ENCODE measurements at regions of chr6 and their contacts with region 1.

Region 1: GRCh38 chr6:109382576-109383437 is 540 bp upstream of the CD164 start:
- DNase-seq: peak; percentile 88
- H3K4me3 Mint-ChIP-seq: peak overlapping the region; percentile 89
- H3K27ac Mint-ChIP-seq: peak overlapping the region; percentile 98
- H3K4me1 Mint-ChIP-seq: peaks cover 46% of the 10 kb centered on the region
- H3K27me3 Mint-ChIP-seq: peaks cover 6% of the 10 kb centered on the region

Region 2: GRCh38 chr6:107957909-107958688 is 1424.7 kb before region 1 on chr6 and contains the start of gene SEC63:
- intact Hi-C with region 1: loop called (anchors 2 kb)
- DNase-seq: peak; percentile 97
- H3K4me3 Mint-ChIP-seq: peak within 1 kb of the TSS; percentile 100
- H3K27ac Mint-ChIP-seq: peak within 1 kb of the TSS; percentile 99
- H3K4me1 Mint-ChIP-seq: peaks cover 14% of the 10 kb centered on the region
- H3K27me3 Mint-ChIP-seq: peaks cover 5% of the 10 kb centered on the region
- total RNA-seq, gene SEC63: 87.1 and 90.7 TPM in 2 replicates

Region 3: DNA sequence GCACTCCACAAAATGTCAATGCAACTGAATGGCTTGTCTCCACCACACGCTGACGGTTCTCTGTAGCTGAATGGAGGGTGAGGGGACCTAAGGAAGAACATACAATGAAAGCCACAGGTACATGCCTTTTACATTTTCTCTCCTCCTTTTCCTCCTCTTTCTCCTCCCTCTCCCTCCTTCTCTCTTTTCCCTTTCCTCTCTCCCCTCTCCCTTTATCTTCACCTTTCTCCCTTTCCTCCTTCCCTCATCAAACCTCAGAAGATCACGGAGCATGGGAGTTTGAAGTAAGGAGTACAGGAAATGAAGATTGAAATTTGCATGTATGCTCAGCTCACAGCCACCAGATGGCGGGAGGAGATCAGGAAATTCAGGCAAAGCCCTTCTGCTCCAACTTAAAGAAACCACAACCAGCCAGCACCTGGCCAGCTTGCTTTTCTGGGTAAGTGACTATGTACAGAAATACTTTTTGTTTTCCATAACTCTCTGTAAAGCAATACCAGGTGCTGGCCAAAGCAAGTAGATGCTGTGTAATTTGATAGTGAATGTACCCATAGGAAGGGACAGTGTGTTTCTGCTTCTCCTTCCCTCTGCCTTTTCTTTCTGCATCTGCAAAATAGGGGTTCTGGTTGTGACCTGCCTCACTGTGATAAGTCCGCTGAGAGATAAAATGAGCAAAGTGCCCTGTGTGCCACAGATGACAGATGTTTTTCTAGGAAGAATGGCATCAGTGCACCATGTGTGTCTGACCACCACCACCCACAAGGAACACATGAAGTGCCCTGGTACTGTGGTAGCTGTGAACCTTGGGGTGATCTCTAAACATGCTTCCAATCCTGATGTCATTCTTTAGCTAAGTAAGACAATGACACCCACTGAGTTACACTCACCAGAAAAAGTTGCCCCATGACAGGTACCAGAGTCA is 840.7 kb before region 1 on chr6:
- intact Hi-C with region 1: loop called (anchors 5 kb)
- DNase-seq: peak; percentile 52
- H3K4me3 Mint-ChIP-seq: no peak overlapping the region
- H3K27ac Mint-ChIP-seq: no peak overlapping the region
- H3K4me1 Mint-ChIP-seq: peaks cover 10% of the 10 kb centered on the region
- H3K27me3 Mint-ChIP-seq: peaks cover 39% of the 10 kb centered on the region

Region 4: GRCh38 chr6:109095027-109095834 is 287.6 kb before region 1 on chr6 and contains the start of gene CEP57L1:
- intact Hi-C with region 1: loop called (anchors 1 kb)
- DNase-seq: peak; percentile 91
- H3K4me3 Mint-ChIP-seq: peak within 1 kb of the TSS; percentile 95
- H3K27ac Mint-ChIP-seq: peak within 1 kb of the TSS; percentile 97
- H3K4me1 Mint-ChIP-seq: peaks cover 54% of the 10 kb centered on the region
- H3K27me3 Mint-ChIP-seq: no peaks in the 10 kb centered on the region
- total RNA-seq, gene CEP57L1: 13.5 and 16.3 TPM in 2 replicates

Region 5: GRCh38 chr6:109308018-109308492 is 74.8 kb before region 1 on chr6:
- intact Hi-C with region 1: loop called (anchors 2 kb)
- DNase-seq: no peak
- H3K4me3 Mint-ChIP-seq: no peak overlapping the region
- H3K27ac Mint-ChIP-seq: no peak overlapping the region
- H3K4me1 Mint-ChIP-seq: peaks cover 12% of the 10 kb centered on the region
- H3K27me3 Mint-ChIP-seq: peaks cover 2% of the 10 kb centered on the region

Region 6: GRCh38 chr6:109482905-109483735 is 100.3 kb after region 1 on chr6 and contains the start of gene ZBTB24:
- intact Hi-C with region 1: loop called (anchors 1 kb)
- DNase-seq: peak; percentile 87
- H3K4me3 Mint-ChIP-seq: peak within 1 kb of the TSS; percentile 98
- H3K27ac Mint-ChIP-seq: peak within 1 kb of the TSS; percentile 92
- H3K4me1 Mint-ChIP-seq: peaks cover 47% of the 10 kb centered on the region
- H3K27me3 Mint-ChIP-seq: peaks cover 1% of the 10 kb centered on the region
- total RNA-seq, gene ZBTB24: 19.5 and 20.8 TPM in 2 replicates

Region 7: GRCh38 chr6:110270165-110270564 is 887.4 kb after region 1 on chr6:
- intact Hi-C with region 1: no loop called
- DNase-seq: no peak
- H3K4me3 Mint-ChIP-seq: no peak overlapping the region
- H3K27ac Mint-ChIP-seq: no peak overlapping the region
- H3K4me1 Mint-ChIP-seq: no peaks in the 10 kb centered on the region
- H3K27me3 Mint-ChIP-seq: peaks cover 2% of the 10 kb centered on the region

Region 8: GRCh38 chr6:110873981-110874879 is 1491.4 kb after region 1 on chr6 and contains the start of gene AMD1:
- intact Hi-C with region 1: loop called (anchors 5 kb)
- DNase-seq: peak; percentile 94
- H3K4me3 Mint-ChIP-seq: peak within 1 kb of the TSS; percentile 97
- H3K27ac Mint-ChIP-seq: peak within 1 kb of the TSS; percentile 98
- H3K4me1 Mint-ChIP-seq: peaks cover 37% of the 10 kb centered on the region
- H3K27me3 Mint-ChIP-seq: no peaks in the 10 kb centered on the region
- total RNA-seq, gene AMD1: 101 and 109 TPM in 2 replicates